A549 (cell line): ENCODE measurements at regions of chr17 and their contacts with region 1.

Region 1: DNA sequence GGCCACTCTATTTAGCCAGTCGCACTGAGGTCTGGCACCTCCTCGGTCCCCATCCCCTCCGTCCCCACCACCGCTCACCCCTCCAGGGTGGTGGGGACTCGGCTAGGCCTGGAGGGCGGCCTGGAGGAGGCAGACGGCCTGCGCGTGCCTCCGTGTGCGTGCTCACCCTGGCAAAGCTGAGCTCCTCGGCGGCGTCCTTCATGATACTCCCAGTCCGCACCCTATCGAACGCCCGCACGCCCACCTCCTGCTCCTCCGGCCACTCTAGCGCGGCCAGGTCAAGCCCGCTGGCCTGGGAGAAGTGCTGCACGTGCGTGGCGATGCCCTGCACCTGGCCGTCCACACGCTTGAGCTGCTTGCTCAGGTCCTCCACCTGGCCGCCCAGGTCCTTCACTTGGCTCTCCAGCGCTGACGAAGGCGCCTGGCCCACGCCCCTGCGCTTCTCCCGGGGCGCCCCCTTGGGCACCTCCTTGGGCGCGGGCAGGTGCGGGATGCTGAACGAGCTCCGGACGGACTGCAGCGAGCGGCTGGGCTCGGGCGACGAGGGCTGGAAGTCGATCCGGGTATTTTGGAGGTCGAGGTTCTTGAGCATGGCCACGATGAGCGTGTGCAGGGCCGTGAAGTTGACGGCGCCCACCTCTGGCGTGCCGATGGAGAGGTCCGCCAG is 644 bp downstream of the QRICH2 start:
- DNase-seq: no peak
- ATAC-seq: no peak
- H3K4me3 ChIP-seq: no peak overlapping the region
- H3K27ac ChIP-seq: no peak overlapping the region
- H3K4me1 ChIP-seq: no peaks in the 10 kb centered on the region
- CTCF ChIP-seq: no peak
- EP300 ChIP-seq: no peak
- POLR2A ChIP-seq: no peak
- RAD21 ChIP-seq: no peak

Region 2: GRCh38 chr17:76252040-76252954 is 55.1 kb before region 1 on chr17:
- CTCF ChIA-PET with region 1: no interaction called
- POLR2A ChIA-PET with region 1: no interaction called
- DNase-seq: peak in 1 of 2 experiments; percentile 88
- ATAC-seq: peak; percentile 94 to 97
- H3K4me3 ChIP-seq: no peak overlapping the region
- H3K27ac ChIP-seq: peak overlapping the region; percentile 60 to 70
- H3K4me1 ChIP-seq: peaks cover 21% of the 10 kb centered on the region
- CTCF ChIP-seq: no peak
- EP300 ChIP-seq: no peak
- POLR2A ChIP-seq: no peak
- RAD21 ChIP-seq: no peak

Region 3: DNA sequence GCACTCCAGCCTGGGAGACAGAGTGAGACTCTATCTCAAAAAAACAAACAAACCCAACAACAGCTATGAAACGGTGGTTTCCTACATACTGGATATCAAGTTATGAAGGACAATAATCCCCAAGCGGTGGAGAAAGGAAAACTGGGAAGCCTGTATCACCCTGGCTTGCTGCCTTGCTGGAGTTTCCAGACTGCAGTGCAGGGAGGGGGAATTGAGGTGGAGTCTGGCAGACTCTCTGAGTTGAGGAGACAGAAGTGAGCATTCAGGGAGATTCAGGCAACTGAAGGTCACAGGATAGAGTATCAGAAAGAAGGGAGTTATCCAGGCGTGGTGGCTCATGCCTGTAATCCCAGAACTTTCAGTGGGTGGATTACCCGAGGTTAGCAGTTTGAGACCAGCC is 11.2 kb before region 1 on chr17:
- CTCF ChIA-PET with region 1: interaction called, 285 read pairs
- POLR2A ChIA-PET with region 1: no interaction called
- DNase-seq: no peak
- ATAC-seq: no peak
- H3K4me3 ChIP-seq: no peak overlapping the region
- H3K27ac ChIP-seq: no peak overlapping the region
- H3K4me1 ChIP-seq: no peaks in the 10 kb centered on the region
- CTCF ChIP-seq: no peak
- EP300 ChIP-seq: no peak
- POLR2A ChIP-seq: no peak
- RAD21 ChIP-seq: no peak

Region 4: GRCh38 chr17:76353599-76354316 is 46.3 kb after region 1 on chr17 and contains the start of gene PRPSAP1:
- CTCF ChIA-PET with region 1: interaction called, 40 read pairs
- POLR2A ChIA-PET with region 1: no interaction called
- DNase-seq: peak; percentile 95 to 98
- ATAC-seq: peak; percentile 97 to 98
- H3K4me3 ChIP-seq: peak within 1 kb of the TSS; percentile 83
- H3K27ac ChIP-seq: peak within 1 kb of the TSS; percentile 93 to 97
- H3K4me1 ChIP-seq: peaks cover 18% of the 10 kb centered on the region; the same call in 2 of the 3 replicates
- CTCF ChIP-seq: no peak
- EP300 ChIP-seq: no peak; a peak in 1 of 5 replicates
- POLR2A ChIP-seq: peak; percentile 98
- RAD21 ChIP-seq: no peak
- polyA plus RNA-seq, gene PRPSAP1: 80.9 and 92.1 TPM in 2 replicates

Region 5: GRCh38 chr17:76397687-76398487 is 90.5 kb after region 1 on chr17:
- CTCF ChIA-PET with region 1: interaction called, 252 read pairs
- POLR2A ChIA-PET with region 1: no interaction called
- DNase-seq: peak; percentile 88 to 90
- ATAC-seq: peak; percentile 78 to 93
- H3K4me3 ChIP-seq: no peak overlapping the region
- H3K27ac ChIP-seq: no peak overlapping the region
- H3K4me1 ChIP-seq: no peaks in the 10 kb centered on the region
- CTCF ChIP-seq: peak; percentile 95
- EP300 ChIP-seq: no peak
- POLR2A ChIP-seq: no peak
- RAD21 ChIP-seq: peak; percentile 78 to 86

Region 6: DNA sequence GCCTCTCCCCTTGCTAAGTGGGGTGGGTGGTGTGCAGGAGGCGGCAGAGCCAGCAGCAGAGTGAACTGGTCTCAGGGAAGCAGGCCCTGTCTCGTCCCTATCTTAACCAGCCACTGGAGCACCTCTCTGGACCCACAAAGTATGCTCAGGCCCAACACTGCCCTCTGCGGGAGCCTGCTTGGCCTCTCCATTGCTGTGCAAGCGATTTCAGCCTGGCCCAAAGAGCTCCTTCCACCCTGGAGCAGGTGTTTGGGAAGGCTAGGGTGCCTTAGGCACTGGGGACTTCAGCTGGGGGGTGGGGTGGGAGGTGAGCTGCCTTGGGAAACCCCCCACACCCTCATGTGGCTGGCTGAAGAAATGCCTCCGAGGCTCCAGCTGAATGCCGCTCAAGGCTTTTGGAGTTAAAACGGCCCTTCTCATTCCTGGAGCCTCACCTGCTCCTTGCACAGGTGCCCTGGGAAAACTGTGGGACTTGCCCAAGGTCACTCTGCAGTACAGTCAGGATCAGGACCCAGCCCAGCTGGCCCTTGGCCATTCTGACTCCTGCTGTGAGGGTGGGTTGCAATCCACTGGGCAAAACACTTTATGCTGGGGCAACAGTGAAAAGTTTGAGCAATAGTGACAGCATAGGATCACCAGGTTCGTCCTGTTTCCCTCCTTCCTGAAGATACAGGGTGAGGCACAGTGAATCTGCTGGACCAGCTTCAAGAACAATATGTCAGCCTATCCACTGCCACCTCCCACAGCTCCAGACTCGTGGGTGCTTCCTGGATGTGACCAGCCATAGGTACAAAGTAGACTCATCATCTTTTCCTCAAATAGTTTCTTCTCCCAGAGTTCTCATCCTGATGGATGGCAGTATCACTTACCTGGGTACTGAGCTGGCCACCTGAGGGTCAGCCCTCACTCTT is 151.4 kb after region 1 on chr17:
- CTCF ChIA-PET with region 1: interaction called, 12 read pairs
- POLR2A ChIA-PET with region 1: no interaction called
- DNase-seq: peak; percentile 78 to 91
- ATAC-seq: peak; percentile 91 to 95
- H3K4me3 ChIP-seq: no peak overlapping the region
- H3K27ac ChIP-seq: no peak overlapping the region; a peak in 1 of 6 replicates
- H3K4me1 ChIP-seq: no peaks in the 10 kb centered on the region
- CTCF ChIP-seq: peak; percentile 76
- EP300 ChIP-seq: no peak
- POLR2A ChIP-seq: no peak
- RAD21 ChIP-seq: peak; percentile 82 to 89